MCF 10A (cell line): ENCODE measurements at regions of chr10 and their contacts with region 1.

Region 1: DNA sequence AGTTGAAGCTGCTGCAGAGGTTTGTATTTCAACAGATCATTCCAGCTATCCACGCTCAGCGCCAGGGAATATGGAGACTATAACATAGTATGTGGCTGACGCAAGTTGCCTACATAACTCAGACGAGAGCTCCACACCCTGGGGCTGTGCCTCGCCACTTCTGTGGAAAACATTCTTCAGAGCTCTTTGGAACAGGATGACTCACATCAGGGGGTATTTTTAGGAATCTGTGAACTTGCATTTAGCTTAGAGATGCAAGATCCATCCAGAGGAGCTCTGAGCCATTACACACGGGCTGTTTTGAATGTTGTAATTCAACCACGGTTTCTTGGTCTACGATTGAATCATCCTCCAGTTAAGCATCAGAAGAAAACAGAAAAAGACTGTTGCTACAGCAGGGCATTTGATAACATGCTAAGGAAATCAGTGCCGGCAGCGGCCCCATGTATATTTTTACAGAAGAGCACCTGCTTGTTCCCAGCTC is 481.5 kb upstream of the AKR1E2 start:
- DNase-seq: peak; percentile 99
- H3K4me3 Mint-ChIP-seq: peak overlapping the region; percentile 48
- H3K27ac Mint-ChIP-seq: peak overlapping the region; percentile 99
- H3K4me1 Mint-ChIP-seq: peaks cover 26% of the 10 kb centered on the region
- H3K27me3 Mint-ChIP-seq: no peaks in the 10 kb centered on the region
- CTCF ChIP-seq: no peak

Region 2: DNA sequence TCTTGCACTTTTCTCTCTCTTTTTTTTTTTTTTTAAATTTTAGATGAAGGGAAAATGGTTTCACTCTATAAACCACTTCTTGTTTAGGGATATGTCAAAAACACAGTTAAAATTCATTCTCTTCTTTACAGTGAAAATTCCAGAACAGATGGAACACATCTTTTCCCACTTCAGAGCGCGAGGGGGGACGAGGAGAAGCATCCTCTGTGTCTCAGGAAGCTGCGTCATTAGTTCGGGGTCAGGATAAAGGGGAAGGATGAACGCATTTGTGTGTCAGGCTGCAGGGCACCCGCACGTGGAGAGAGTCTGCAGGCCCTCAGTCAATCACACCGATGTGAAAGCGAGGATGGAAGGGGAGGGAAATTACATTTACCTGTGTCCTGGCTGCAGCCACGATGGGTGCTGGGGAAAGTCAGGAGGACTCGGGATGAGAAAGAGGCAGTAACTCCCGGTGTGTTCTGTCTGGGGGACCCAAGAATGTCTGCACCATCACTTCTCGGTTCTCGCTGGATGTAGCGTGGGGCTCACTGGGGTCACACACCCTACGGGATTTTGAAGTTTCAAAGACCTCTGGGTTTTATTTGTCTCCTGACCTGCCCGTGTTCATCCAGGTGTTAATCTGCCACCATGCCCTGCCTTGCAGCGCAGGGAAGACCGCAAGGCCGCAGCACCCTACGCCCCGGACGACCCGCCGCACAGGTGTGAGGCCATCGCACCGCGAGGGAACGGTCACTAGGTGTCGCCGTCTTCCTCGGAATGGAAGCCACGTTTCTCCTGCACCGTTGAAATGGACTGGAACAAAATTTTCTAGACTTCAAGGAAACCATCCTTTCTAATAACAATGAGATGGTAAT is 1105.3 kb before region 1 on chr10:
- CTCF ChIA-PET with region 1: no interaction called
- POLR2A ChIA-PET with region 1: no interaction called
- intact Hi-C with region 1: loop called (anchors 10 kb)
- DNase-seq: peak; percentile 67
- H3K4me3 Mint-ChIP-seq: no peak overlapping the region
- H3K27ac Mint-ChIP-seq: peak overlapping the region; percentile 37
- H3K4me1 Mint-ChIP-seq: peaks cover 5% of the 10 kb centered on the region
- H3K27me3 Mint-ChIP-seq: no peaks in the 10 kb centered on the region
- CTCF ChIP-seq: peak; percentile 89

Region 3: GRCh38 chr10:3811291-3811870 is 533.2 kb before region 1 on chr10:
- CTCF ChIA-PET with region 1: interaction called, 3 read pairs
- POLR2A ChIA-PET with region 1: interaction called, 39 read pairs
- intact Hi-C with region 1: loop called (anchors 1 kb)
- DNase-seq: peak; percentile 89
- H3K4me3 Mint-ChIP-seq: peak overlapping the region; percentile 61
- H3K27ac Mint-ChIP-seq: peak overlapping the region; percentile 100
- H3K4me1 Mint-ChIP-seq: peaks cover 51% of the 10 kb centered on the region
- H3K27me3 Mint-ChIP-seq: no peaks in the 10 kb centered on the region
- CTCF ChIP-seq: no peak

Region 4: GRCh38 chr10:4241724-4242345 is 102.7 kb before region 1 on chr10:
- CTCF ChIA-PET with region 1: interaction called, 4 read pairs
- POLR2A ChIA-PET with region 1: interaction called, 12 read pairs
- intact Hi-C with region 1: no loop called
- DNase-seq: no peak
- H3K4me3 Mint-ChIP-seq: no peak overlapping the region
- H3K27ac Mint-ChIP-seq: peak overlapping the region; percentile 77
- H3K4me1 Mint-ChIP-seq: peaks cover 43% of the 10 kb centered on the region
- H3K27me3 Mint-ChIP-seq: no peaks in the 10 kb centered on the region
- CTCF ChIP-seq: no peak

Region 5: GRCh38 chr10:4370376-4370775 is 25.8 kb after region 1 on chr10:
- CTCF ChIA-PET with region 1: no interaction called
- POLR2A ChIA-PET with region 1: no interaction called
- intact Hi-C with region 1: no loop called
- DNase-seq: no peak
- H3K4me3 Mint-ChIP-seq: no peak overlapping the region
- H3K27ac Mint-ChIP-seq: no peak overlapping the region
- H3K4me1 Mint-ChIP-seq: no peaks in the 10 kb centered on the region
- H3K27me3 Mint-ChIP-seq: no peaks in the 10 kb centered on the region
- CTCF ChIP-seq: no peak

Region 6: GRCh38 chr10:4512671-4513240 is 168.2 kb after region 1 on chr10:
- CTCF ChIA-PET with region 1: no interaction called
- POLR2A ChIA-PET with region 1: no interaction called
- intact Hi-C with region 1: loop called (anchors 5 kb)
- DNase-seq: peak; percentile 78
- H3K4me3 Mint-ChIP-seq: no peak overlapping the region
- H3K27ac Mint-ChIP-seq: peak overlapping the region; percentile 76
- H3K4me1 Mint-ChIP-seq: peaks cover 9% of the 10 kb centered on the region
- H3K27me3 Mint-ChIP-seq: no peaks in the 10 kb centered on the region
- CTCF ChIP-seq: peak; percentile 52

Region 7: DNA sequence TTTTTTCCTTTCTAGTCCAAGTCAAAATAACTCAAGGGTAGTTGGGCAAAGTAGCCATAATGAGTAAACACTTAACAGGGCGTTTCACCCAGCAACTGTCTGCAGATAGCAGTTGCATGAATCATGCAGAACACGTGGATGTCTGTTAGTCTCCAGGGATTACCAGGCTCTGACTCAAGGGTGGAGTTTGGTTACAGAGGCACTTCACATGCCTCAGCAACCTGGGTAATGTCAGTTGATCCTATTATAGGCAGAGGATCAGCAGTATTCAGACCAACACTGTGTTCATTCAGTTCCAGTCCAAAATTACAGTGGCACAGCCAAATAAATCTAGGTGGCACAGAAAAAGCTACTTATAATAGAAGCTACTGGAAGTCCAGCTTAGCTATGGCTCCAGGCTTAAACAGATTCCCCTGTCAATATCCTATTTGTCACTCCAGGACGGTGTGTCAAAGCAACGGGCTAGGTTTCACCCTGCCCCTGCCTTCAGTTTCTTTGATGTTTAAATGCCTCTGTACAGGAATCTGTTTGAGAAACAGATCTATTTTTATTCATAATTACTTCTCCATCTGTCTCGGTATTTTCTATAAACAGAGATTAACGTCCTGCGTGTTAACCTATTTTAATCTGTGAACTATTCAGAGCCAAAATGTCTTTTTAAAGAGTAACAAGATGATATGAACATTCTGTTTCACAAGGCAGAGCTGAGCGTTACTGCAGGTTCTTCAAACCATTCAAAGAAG is 318.8 kb after region 1 on chr10:
- CTCF ChIA-PET with region 1: no interaction called
- POLR2A ChIA-PET with region 1: interaction called, 10 read pairs
- intact Hi-C with region 1: no loop called
- DNase-seq: peak; percentile 99
- H3K4me3 Mint-ChIP-seq: peak overlapping the region; percentile 66
- H3K27ac Mint-ChIP-seq: peak overlapping the region; percentile 100
- H3K4me1 Mint-ChIP-seq: peaks cover 28% of the 10 kb centered on the region
- H3K27me3 Mint-ChIP-seq: no peaks in the 10 kb centered on the region
- CTCF ChIP-seq: no peak